ENCODE measurements at regions of chr6 and their contacts with region 1.

Region 1: GRCh38 chr6:124200661-124201060 is 397.0 kb downstream of the NKAIN2 start:
- DNase-seq: no peak
- ATAC-seq: no peak
- H3K4me3 ChIP-seq: no peak overlapping the region
- H3K4me3 Mint-ChIP-seq: no peak overlapping the region
- H3K27ac ChIP-seq: no peak overlapping the region
- H3K27ac Mint-ChIP-seq: no peak overlapping the region
- H3K4me1 ChIP-seq: no peaks in the 10 kb centered on the region
- H3K4me1 Mint-ChIP-seq: no peaks in the 10 kb centered on the region
- H3K27me3 ChIP-seq: no peaks in the 10 kb centered on the region
- H3K27me3 Mint-ChIP-seq: no peaks in the 10 kb centered on the region
- CTCF ChIP-seq: no peak

Region 2: DNA sequence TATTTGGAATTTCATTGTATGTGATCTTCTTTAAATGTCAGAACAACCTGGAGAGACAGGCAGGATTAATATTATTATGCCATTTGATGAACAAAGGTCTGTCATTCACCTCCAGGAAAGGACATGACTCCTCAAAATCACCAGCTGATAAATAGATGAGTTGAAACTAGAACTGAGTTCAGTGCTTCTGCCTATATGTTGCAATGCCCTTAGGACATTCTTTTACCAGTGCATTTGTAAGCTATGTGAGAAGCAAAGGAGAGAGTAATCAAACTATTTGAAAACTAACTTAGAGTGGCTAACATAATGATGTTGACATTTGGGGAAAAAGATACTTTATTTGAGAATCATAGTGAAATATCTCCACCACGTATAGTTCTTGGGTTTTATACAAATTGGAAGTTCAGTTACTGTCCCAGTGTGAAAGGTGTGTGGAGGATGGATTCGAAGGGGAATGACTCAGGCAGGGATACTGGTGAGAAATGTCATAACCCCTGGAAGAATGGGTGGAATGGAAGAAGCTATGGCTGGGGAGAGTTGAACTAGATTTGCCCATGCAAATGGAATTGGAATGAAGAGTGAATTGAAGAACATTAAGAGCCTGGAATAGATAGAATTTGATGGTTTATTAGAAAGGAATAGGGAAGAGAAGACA is 1569.0 kb before region 1 on chr6:
- CTCF ChIA-PET with region 1: no interaction called
- POLR2A ChIA-PET with region 1: no interaction called
- intact Hi-C with region 1: no loop called
- DNase-seq: no peak
- ATAC-seq: no peak
- H3K4me3 ChIP-seq: no peak overlapping the region
- H3K4me3 Mint-ChIP-seq: no peak overlapping the region
- H3K27ac ChIP-seq: no peak overlapping the region
- H3K27ac Mint-ChIP-seq: no peak overlapping the region
- H3K4me1 ChIP-seq: no peaks in the 10 kb centered on the region
- H3K4me1 Mint-ChIP-seq: no peaks in the 10 kb centered on the region
- H3K27me3 ChIP-seq: no peaks in the 10 kb centered on the region
- H3K27me3 Mint-ChIP-seq: peaks cover 4% of the 10 kb centered on the region
- CTCF ChIP-seq: no peak

Region 3: GRCh38 chr6:124132256-124132655 is 68.4 kb before region 1 on chr6:
- CTCF ChIA-PET with region 1: no interaction called
- POLR2A ChIA-PET with region 1: no interaction called
- intact Hi-C with region 1: loop called in 1 of 2 experiments (anchors 2 kb)
- DNase-seq: no peak
- ATAC-seq: no peak
- H3K4me3 ChIP-seq: no peak overlapping the region
- H3K4me3 Mint-ChIP-seq: no peak overlapping the region
- H3K27ac ChIP-seq: no peak overlapping the region
- H3K27ac Mint-ChIP-seq: no peak overlapping the region
- H3K4me1 ChIP-seq: no peaks in the 10 kb centered on the region
- H3K4me1 Mint-ChIP-seq: no peaks in the 10 kb centered on the region
- H3K27me3 ChIP-seq: no peaks in the 10 kb centered on the region
- H3K27me3 Mint-ChIP-seq: no peaks in the 10 kb centered on the region
- CTCF ChIP-seq: no peak

Region 4: DNA sequence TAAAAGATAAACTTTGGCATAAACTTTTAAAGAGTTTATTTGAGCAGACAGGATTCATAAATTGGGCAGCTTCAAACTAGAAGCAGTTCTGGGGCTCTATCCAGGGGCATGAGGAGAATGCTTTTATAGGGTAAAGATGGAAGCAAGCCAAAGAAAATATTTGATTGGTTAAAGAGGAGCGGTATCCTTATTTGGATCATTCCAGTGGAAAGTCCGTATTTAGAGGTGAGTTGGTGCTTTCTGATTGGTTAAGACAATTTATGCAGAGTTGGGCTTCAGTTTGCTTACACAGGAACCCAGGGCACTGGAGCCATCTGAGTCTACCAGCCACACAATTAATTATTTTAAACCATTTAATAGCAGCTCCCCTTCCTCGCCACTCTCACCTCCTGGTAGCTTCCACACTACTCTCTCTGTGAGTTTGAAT is 723.7 kb after region 1 on chr6:
- CTCF ChIA-PET with region 1: no interaction called
- POLR2A ChIA-PET with region 1: no interaction called
- intact Hi-C with region 1: no loop called
- DNase-seq: no peak
- ATAC-seq: no peak
- H3K4me3 ChIP-seq: no peak overlapping the region
- H3K4me3 Mint-ChIP-seq: no peak overlapping the region
- H3K27ac ChIP-seq: no peak overlapping the region
- H3K27ac Mint-ChIP-seq: no peak overlapping the region
- H3K4me1 ChIP-seq: no peaks in the 10 kb centered on the region
- H3K4me1 Mint-ChIP-seq: no peaks in the 10 kb centered on the region
- H3K27me3 ChIP-seq: no peaks in the 10 kb centered on the region
- H3K27me3 Mint-ChIP-seq: peaks cover 5% of the 10 kb centered on the region
- CTCF ChIP-seq: no peak